ENCODE measurements at regions of chr16 and their contacts with region 1.

Region 1: DNA sequence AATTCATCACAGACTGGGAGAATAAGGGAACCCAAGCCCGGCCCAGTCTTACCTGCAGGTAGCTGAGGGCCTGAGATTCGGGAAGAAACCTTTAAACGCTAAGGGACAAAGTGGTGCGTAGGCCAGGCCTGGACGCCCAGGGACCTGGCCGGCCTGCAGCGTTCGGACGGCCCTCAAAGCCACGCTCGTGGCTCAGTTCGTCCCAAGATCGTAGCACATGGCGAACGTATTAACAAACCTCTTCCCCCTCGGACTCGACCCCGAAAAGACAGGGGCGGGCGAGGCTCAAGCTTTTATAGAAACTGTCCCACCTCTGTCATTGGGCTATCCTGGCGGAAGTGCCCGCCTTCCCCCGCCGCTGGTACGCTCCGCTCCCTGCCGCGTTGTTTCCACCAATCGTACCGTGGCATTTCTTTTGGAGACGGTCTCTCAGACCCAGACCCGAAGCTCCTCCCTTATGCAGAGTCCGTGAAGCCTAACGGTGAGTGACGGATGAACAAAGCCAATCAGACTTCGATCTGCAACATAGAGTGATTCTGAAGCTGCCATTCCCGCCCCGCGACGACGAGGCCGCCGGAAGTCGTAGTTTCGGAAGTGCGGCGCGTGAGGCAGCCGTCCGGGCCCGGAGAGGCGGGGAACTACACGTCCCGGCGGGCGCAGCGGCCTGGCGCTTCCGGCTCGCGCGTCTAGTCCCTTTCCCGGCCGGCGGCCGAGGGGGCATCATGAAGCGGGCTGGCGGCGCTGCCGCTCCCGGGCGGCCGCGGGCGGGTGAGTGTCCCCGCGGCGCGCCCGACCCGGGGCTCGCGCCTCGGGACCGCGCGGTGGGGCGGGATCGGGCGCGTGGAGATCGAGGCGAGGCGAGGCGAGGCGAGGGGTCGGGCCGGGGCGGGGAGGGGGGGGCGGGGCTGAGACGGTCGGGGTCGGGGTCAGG is at the start of gene TRAF7:
- DNase-seq: peak; percentile 99
- H3K4me3 Mint-ChIP-seq: peak within 1 kb of the TSS; percentile 97
- H3K27ac Mint-ChIP-seq: peak within 1 kb of the TSS; percentile 91
- H3K4me1 Mint-ChIP-seq: peaks cover 41% of the 10 kb centered on the region
- H3K27me3 Mint-ChIP-seq: no peaks in the 10 kb centered on the region
- total RNA-seq, gene TRAF7: 102 to 104 TPM

Region 2: DNA sequence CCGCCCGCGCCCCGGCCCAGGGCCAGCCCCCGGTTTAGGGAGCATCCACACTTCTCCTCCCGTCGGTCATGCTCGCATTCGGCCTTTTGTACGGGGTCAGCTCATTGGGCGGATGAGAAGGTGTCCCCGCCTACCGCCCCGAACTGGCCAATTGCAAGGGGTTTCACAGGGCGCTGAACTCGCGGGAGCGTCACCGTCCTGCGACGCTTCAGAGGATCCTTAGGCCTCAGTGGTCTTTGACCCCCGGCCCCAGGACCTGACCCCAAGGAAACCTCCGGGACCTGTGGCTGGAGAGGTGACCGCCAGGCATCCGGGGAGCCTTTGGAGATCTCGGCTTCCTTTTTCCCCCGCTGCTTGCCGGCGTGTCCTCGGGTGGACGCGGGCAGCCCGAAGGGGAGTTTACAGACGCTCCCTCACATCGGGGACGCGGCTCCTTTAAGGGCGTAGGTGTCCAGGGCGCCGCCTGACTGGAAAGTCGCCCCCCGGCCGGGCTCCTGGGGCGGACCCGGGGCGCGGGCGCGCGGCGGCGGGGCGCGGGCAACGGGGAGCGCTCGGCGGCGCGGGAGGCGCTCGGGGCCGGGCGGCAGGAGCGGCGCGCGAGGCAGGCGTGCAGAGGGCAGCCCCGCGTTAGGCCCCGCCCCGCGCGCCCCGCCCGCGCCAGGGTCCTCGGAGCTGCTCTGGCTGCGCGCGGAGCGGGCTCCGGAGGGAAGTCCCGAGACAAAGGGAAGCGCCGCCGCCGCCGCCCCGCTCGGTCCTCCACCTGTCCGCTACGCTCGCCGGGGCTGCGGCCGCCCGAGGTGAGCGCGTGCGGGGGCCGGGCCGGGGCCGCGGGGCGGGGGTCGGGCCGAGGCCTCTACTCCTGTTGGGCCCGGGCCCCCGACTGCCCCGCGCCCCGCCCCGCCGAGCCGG is 846.1 kb before region 1 on chr16 and contains the start of gene UBE2I:
- CTCF ChIA-PET with region 1: no interaction called
- intact Hi-C with region 1: loop called (anchors 5 kb)
- DNase-seq: peak; percentile 98
- H3K4me3 Mint-ChIP-seq: peak within 1 kb of the TSS; percentile 94
- H3K27ac Mint-ChIP-seq: peak within 1 kb of the TSS; percentile 99
- H3K4me1 Mint-ChIP-seq: peaks cover 41% of the 10 kb centered on the region
- H3K27me3 Mint-ChIP-seq: no peaks in the 10 kb centered on the region
- total RNA-seq, gene UBE2I: 273 to 297 TPM

Region 3: DNA sequence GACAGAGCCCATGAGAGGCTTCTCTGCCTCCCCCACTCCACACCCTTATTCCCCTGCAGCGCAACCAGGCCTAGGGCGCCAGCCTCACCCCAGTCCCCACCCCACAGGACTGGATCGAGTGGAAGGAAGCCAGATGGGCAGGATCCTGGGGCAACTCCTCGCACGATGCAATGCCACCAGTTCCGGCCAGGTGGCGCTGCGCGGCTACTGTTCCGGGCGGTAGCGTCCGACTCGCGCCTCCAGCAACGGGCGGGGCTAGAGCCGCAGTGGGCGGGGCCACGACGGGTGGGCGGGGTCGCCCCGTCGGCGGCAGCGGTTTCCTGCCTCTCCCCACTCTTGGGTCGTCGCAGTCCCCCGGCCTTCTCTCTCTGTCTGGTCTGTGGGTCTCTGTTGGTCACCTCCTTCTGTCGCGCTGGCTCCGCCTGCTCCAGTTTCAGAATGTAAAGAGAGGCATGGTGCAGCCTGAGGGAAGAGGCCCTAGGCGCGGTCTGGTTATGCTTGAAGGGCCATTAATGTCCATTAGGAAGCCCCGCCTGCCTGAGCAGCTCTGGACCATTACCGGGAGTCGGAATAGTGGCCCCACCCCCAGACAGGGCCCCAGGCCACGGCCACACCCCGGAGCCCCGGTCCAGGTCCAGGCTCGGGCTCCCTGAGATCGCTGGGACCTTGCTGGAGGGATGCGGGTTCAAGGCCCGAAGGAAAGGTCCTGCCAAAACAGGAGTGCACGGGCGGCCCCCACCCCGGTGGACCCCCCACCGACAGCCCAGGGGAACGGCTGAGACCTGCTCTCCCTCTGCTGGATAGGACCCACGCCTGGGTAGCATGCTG is 132.0 kb before region 1 on chr16:
- CTCF ChIA-PET with region 1: interaction called, 3 read pairs
- intact Hi-C with region 1: loop called (anchors 1 kb)
- DNase-seq: peak; percentile 97
- H3K4me3 Mint-ChIP-seq: peak overlapping the region; percentile 49
- H3K27ac Mint-ChIP-seq: no peak overlapping the region
- H3K4me1 Mint-ChIP-seq: peaks cover 22% of the 10 kb centered on the region
- H3K27me3 Mint-ChIP-seq: peaks cover 29% of the 10 kb centered on the region

Region 4: DNA sequence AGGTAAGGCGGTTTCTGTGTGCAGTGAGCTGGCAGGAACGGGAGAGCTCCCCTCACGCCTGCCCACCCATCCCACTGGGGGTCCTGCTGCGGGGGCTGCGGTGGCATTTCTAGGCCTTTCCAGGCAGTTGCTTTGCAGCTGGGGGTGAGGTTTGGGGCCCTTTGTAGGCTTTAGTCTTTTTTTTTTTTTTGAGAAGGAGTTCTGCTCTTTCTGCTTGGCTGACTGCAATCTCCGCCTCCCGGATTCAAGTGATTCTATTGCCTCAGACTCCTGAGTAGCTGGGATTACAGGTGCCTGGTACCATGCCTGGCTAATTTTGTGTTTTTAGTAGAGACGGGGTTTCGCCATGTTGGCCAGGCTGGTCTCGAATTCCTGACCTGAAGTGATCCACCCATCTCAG is 96.5 kb before region 1 on chr16:
- CTCF ChIA-PET with region 1: no interaction called
- intact Hi-C with region 1: no loop called
- DNase-seq: no peak
- H3K4me3 Mint-ChIP-seq: no peak overlapping the region
- H3K27ac Mint-ChIP-seq: no peak overlapping the region
- H3K4me1 Mint-ChIP-seq: no peaks in the 10 kb centered on the region
- H3K27me3 Mint-ChIP-seq: no peaks in the 10 kb centered on the region

Region 5: GRCh38 chr16:2178321-2179106 is 23.2 kb after region 1 on chr16:
- CTCF ChIA-PET with region 1: no interaction called
- intact Hi-C with region 1: no loop called
- DNase-seq: peak; percentile 12
- H3K4me3 Mint-ChIP-seq: no peak overlapping the region
- H3K27ac Mint-ChIP-seq: no peak overlapping the region
- H3K4me1 Mint-ChIP-seq: no peaks in the 10 kb centered on the region
- H3K27me3 Mint-ChIP-seq: no peaks in the 10 kb centered on the region

Region 6: GRCh38 chr16:2205104-2205966 is 50.0 kb after region 1 on chr16 and contains the start of gene MLST8:
- CTCF ChIA-PET with region 1: no interaction called
- intact Hi-C with region 1: loop called (anchors 1 kb)
- DNase-seq: peak; percentile 86
- H3K4me3 Mint-ChIP-seq: peak within 1 kb of the TSS; percentile 78
- H3K27ac Mint-ChIP-seq: peak within 1 kb of the TSS; percentile 85
- H3K4me1 Mint-ChIP-seq: peaks cover 22% of the 10 kb centered on the region
- H3K27me3 Mint-ChIP-seq: no peaks in the 10 kb centered on the region
- total RNA-seq, gene MLST8: 70.0 to 70.1 TPM

Region 7: DNA sequence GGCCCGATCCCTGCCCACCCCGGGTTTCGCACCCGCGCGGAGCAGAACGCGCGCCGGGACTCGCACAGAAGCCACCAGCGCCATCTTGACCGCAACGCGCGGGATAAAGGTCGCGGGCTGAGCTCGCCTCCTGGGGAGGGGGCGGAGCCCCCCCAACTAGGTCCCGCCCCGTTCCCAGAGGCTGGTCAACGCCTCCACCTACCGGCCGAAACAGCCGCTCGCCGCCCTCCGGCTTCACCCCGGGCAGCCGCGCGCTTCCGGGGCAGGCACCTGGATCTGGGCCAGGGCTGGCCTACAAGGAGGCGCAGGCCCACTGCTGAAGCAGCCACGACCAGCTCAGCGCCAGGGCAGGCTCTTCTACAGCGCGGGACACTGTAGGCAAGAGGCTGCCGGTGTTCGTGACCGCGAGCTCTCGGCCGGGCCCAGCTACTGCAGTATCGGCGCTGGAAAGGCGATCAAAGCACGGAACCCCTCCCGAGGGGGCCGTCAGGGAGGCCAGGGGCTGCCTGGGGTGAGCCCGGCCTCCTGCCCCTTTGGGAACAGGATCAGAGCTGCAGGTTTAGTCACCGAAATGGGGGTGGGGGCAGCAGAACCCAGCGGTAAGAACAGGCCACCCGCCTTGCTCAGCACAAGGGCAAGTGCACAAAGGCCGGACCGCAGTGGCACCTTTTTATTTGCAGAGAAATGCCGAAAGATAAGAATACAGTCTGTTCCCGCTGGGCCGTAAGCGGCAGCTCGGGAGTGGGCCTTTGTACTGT is 96.3 kb after region 1 on chr16 and contains the start of gene ECI1:
- CTCF ChIA-PET with region 1: no interaction called
- intact Hi-C with region 1: loop called (anchors 1 kb)
- DNase-seq: peak; percentile 89
- H3K4me3 Mint-ChIP-seq: peak within 1 kb of the TSS; percentile 87
- H3K27ac Mint-ChIP-seq: peak within 1 kb of the TSS; percentile 87
- H3K4me1 Mint-ChIP-seq: peaks cover 13% of the 10 kb centered on the region
- H3K27me3 Mint-ChIP-seq: no peaks in the 10 kb centered on the region
- total RNA-seq, gene ECI1: 39.7 to 48.3 TPM

Region 8: DNA sequence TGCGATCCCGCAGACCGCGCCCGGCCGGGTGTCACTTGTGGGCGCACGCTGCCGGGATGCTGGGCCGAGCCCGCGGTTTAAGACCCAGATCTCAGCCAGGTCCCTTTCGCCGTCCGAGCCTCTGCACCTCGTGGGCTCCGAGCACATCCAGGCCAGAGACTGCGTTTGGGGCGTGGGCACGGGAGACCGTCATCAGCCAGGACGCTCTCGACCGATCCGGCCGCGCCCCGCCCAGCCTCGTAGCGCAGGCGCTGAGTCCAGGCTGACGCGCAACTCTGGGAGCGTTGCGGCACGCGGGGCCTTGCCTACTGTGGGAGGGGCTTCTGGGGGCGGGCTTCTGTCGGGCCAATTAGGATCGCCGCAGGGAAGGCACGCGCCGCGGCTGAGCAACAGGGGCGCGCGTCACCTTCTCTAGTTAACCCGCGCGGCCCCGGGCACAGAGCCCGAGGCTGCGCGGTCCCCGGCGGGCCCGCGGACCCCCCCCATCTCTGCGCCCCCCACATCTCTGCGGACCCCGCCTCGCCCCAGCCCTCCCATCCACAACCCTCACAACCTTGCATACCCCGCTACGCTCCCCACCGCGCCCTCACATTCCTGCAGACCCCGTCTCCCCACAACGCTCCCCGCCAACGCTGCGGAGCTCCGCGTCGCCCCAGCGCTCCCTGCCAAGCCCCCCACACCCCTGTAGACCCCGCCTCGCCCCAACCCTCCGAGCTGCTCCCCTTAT is 376.6 kb after region 1 on chr16:
- CTCF ChIA-PET with region 1: interaction called, 3 read pairs
- intact Hi-C with region 1: loop called (anchors 1 kb)
- DNase-seq: peak; percentile 99
- H3K4me3 Mint-ChIP-seq: peak overlapping the region; percentile 92
- H3K27ac Mint-ChIP-seq: peak overlapping the region; percentile 97
- H3K4me1 Mint-ChIP-seq: peaks cover 16% of the 10 kb centered on the region
- H3K27me3 Mint-ChIP-seq: no peaks in the 10 kb centered on the region

Measured in activated naive CD4-positive, alpha-beta T cell treated with anti-CD3 and anti-CD28 coated beads for 36 hours (primary cell).